CD8-positive, alpha-beta T cell (primary cell): ENCODE measurements at regions of chr4 and their contacts with region 1.

Region 1: GRCh38 chr4:123250843-123251242 is 145.8 kb upstream of the SPRY1 start:
- DNase-seq: no peak
- ATAC-seq: no peak
- H3K4me3 ChIP-seq: no peak overlapping the region
- H3K4me3 Mint-ChIP-seq: no peak overlapping the region
- H3K27ac ChIP-seq: no peak overlapping the region
- H3K27ac Mint-ChIP-seq: no peak overlapping the region
- H3K4me1 ChIP-seq: no peaks in the 10 kb centered on the region
- H3K4me1 Mint-ChIP-seq: no peaks in the 10 kb centered on the region
- H3K27me3 ChIP-seq: no peaks in the 10 kb centered on the region
- H3K27me3 Mint-ChIP-seq: no peaks in the 10 kb centered on the region
- CTCF ChIP-seq: no peak

Region 2: GRCh38 chr4:123209436-123209835 is 41.4 kb before region 1 on chr4:
- CTCF ChIA-PET with region 1: no interaction called
- POLR2A ChIA-PET with region 1: no interaction called
- intact Hi-C with region 1: loop called in 1 of 2 experiments (anchors 1 kb)
- DNase-seq: no peak
- ATAC-seq: no peak
- H3K4me3 ChIP-seq: no peak overlapping the region
- H3K4me3 Mint-ChIP-seq: no peak overlapping the region
- H3K27ac ChIP-seq: no peak overlapping the region
- H3K27ac Mint-ChIP-seq: no peak overlapping the region
- H3K4me1 ChIP-seq: no peaks in the 10 kb centered on the region
- H3K4me1 Mint-ChIP-seq: no peaks in the 10 kb centered on the region
- H3K27me3 ChIP-seq: no peaks in the 10 kb centered on the region
- H3K27me3 Mint-ChIP-seq: no peaks in the 10 kb centered on the region
- CTCF ChIP-seq: no peak